Esophagus squamous epithelium (tissue), 5 donors: ENCODE measurements at regions of chr9 and their contacts with region 1.

Region 1: DNA sequence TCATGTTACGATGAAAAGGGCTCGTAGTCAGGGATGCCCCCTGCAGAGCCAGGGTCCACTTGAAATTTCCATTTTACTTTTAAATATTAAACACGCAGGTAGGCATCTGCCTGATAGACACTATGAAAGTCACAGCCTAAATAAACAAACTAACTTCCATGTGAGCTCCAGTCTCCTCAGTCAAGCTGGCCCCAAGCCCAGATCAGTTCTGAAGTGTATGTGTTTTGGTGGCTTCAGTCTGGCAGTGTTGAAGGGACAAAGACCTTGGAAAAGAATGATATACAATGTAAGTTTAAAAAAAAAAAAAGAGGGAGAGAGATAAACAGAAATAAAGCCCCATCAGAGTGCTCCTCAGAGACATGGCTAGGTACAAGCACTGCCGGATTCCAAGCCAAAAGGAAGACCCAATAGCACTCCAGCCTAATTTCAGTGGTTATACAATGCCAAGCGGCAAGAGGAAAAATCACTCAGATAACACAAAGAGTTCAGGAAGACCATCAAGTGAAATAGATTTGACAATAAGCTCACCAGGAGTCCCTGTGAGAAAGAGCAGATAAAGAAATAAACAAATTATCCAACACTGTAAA is 181.0 kb downstream of the BNC2 start:
- DNase-seq: no peak
- H3K4me3 ChIP-seq: no peak overlapping the region
- H3K27ac ChIP-seq: peak overlapping the region in 2 of 4 donors; percentile 7 to 13
- H3K4me1 ChIP-seq: peaks cover 0 to 9% (median 3%) of the 10 kb centered on the region in 3 donors
- H3K27me3 ChIP-seq: no peaks in the 10 kb centered on the region
- CTCF ChIP-seq: no peak
- POLR2A ChIP-seq: no peak

Region 2: DNA sequence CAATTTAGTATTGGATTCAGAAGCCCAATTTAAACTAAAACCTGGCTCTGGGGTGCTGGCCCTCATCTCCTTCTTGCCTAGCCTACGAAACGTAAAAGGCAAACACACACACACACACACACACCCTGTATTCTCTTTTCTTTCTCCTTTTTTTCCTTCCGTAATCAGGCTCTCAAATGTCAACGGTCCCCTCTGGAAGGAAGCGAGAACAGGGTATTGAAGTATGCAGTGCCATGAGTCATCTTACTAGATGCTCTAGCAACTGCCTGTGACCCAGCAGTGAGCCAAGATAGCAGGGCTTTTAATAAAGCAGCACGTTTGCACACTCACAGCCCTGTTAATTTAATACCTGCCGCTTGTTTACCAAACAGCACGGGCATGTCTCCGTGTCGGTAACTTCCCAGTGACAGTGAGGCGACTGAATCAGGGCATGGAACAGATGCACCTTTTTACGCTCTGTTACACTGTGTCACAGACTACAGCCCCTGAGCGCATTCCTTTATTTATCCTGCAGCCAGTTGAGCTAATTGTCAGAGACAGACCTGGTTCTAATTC is 62.8 kb before region 1 on chr9:
- intact Hi-C with region 1: loop called (anchors 10 kb)
- DNase-seq: no peak
- H3K4me3 ChIP-seq: no peak overlapping the region
- H3K27ac ChIP-seq: peak overlapping the region in 2 of 4 donors; percentile 3 to 58
- H3K4me1 ChIP-seq: peaks cover 6 to 24% (median 12%) of the 10 kb centered on the region in 3 donors
- H3K27me3 ChIP-seq: no peaks in the 10 kb centered on the region
- CTCF ChIP-seq: no peak
- POLR2A ChIP-seq: no peak